ENCODE measurements at regions of chr20 and their contacts with region 1.

Region 1: GRCh38 chr20:13507646-13508045 is 131.1 kb downstream of the TASP1 start:
- DNase-seq: no peak
- ATAC-seq: no peak
- H3K4me3 ChIP-seq: no peak overlapping the region
- H3K27ac ChIP-seq: no peak overlapping the region
- H3K4me1 ChIP-seq: no peaks in the 10 kb centered on the region
- H3K27me3 ChIP-seq: no peaks in the 10 kb centered on the region
- CTCF ChIP-seq: no peak
- EP300 ChIP-seq: no peak
- POLR2A ChIP-seq: no peak
- RAD21 ChIP-seq: no peak

Region 2: DNA sequence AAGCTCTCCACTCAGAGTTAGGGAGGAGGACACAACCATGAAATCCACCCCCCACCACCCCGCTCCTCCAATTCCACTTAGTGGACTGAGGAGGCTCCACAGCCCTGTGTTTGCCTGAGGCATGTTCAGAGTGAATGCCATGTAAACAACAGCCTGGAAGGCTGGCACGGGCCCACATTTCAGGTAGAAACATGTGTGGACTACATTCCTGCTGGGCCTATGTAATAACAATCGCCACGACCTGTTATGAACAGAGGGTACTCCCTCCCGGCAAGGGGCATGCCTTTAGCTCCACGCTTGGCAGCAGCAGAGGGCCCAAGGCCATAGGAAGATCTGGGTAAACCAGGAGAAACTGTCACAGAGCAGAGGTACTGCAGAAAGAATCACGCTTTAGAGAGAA is 221.0 kb before region 1 on chr20:
- CTCF ChIA-PET with region 1: no interaction called
- POLR2A ChIA-PET with region 1: no interaction called
- in situ Hi-C with region 1: no loop called
- intact Hi-C with region 1: no loop called
- DNase-seq: no peak
- ATAC-seq: 0 out of 3 replicates have a peak, but pooled peaks have one; percentile 19
- H3K4me3 ChIP-seq: no peak overlapping the region
- H3K27ac ChIP-seq: no peak overlapping the region
- H3K4me1 ChIP-seq: peaks cover 10% of the 10 kb centered on the region
- H3K27me3 ChIP-seq: no peaks in the 10 kb centered on the region; a peak in 1 of 5 replicates
- CTCF ChIP-seq: no peak
- EP300 ChIP-seq: no peak
- POLR2A ChIP-seq: no peak
- RAD21 ChIP-seq: no peak

Region 3: GRCh38 chr20:15461938-15462337 is 1954.3 kb after region 1 on chr20:
- CTCF ChIA-PET with region 1: no interaction called
- POLR2A ChIA-PET with region 1: no interaction called
- in situ Hi-C with region 1: no loop called
- intact Hi-C with region 1: loop called (anchors 5 kb)
- DNase-seq: no peak
- ATAC-seq: no peak
- H3K4me3 ChIP-seq: no peak overlapping the region
- H3K27ac ChIP-seq: no peak overlapping the region
- H3K4me1 ChIP-seq: no peaks in the 10 kb centered on the region
- H3K27me3 ChIP-seq: no peaks in the 10 kb centered on the region
- CTCF ChIP-seq: no peak
- EP300 ChIP-seq: no peak
- POLR2A ChIP-seq: no peak
- RAD21 ChIP-seq: no peak

Measured in HepG2 (cell line).